ENCODE measurements at regions of chr7 and their contacts with region 1.

Region 1: GRCh38 chr7:142557971-142558582 is 191.2 kb upstream of the PRSS1 start:
- DNase-seq: peak; percentile 29
- H3K4me3 Mint-ChIP-seq: peak overlapping the region; percentile 78
- H3K27ac Mint-ChIP-seq: peak overlapping the region; percentile 35
- H3K4me1 Mint-ChIP-seq: peaks cover 30% of the 10 kb centered on the region
- H3K27me3 Mint-ChIP-seq: peaks cover 2% of the 10 kb centered on the region

Region 2: DNA sequence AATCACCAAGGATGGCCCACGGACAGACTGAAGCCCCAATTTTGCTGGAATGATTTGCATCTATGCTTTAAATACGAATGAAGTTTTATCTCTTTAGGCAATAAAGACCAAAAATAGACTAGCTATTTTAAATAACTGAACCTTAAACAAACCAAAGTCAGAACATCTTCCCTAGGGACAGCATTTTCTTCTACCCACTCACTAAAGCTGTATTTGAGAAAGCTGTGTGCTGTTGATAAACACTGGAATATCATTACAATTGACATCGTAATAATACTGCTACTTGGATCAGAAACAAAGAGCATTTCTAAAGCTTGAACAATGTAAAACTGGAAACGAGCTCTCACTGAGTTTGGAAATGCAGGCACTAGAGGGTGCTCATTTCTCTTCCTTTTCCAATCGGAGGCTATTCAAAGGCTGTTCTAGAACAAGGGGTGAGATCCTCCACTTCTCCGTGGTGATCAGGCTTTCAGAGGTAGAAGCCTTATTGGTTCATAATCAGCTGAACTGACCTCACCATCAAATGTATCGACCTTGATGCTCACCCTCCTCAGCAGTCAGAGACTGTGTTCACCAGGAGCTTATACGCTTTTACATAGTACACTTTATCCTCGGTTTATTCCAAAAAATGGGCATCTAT is 34.1 kb before region 1 on chr7:
- intact Hi-C with region 1: no loop called
- DNase-seq: no peak
- H3K4me3 Mint-ChIP-seq: no peak overlapping the region
- H3K27ac Mint-ChIP-seq: no peak overlapping the region
- H3K4me1 Mint-ChIP-seq: peaks cover 10% of the 10 kb centered on the region
- H3K27me3 Mint-ChIP-seq: peaks cover 10% of the 10 kb centered on the region

Region 3: DNA sequence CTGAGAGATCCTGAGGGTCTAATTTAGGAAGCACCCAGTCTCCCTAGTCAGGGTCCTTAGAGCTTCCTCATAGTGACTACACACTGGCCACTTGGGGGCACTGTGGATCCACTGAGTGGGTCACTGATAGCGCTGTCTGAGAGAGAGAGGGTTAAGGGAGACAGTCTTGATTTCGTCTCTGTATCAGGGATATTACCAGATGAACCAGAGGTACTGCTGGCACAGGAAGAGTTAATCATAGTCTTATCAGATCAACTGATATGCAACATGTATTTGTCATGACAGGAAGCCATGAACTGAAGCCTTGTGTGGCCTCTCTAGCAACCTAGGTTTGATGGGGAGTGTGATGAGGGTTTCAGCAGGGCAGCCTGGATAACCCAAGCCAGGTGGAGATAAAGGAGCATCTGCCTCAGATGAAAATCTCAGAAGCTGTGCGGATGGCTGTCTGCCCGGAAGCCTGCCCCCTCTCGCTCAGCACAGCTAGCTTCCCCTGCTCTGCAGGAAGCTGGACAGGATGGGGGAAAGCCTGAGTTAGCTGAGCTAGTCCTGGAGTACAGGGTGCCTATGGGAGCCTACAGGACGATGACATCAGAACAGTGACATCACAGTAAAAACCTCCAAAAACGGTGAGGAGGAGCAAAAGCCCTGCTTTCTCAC is 22.8 kb before region 1 on chr7:
- intact Hi-C with region 1: loop called (anchors 1 kb)
- DNase-seq: peak; percentile 58
- H3K4me3 Mint-ChIP-seq: peak overlapping the region; percentile 59
- H3K27ac Mint-ChIP-seq: peak overlapping the region; percentile 62
- H3K4me1 Mint-ChIP-seq: peaks cover 29% of the 10 kb centered on the region
- H3K27me3 Mint-ChIP-seq: no peaks in the 10 kb centered on the region

Region 4: DNA sequence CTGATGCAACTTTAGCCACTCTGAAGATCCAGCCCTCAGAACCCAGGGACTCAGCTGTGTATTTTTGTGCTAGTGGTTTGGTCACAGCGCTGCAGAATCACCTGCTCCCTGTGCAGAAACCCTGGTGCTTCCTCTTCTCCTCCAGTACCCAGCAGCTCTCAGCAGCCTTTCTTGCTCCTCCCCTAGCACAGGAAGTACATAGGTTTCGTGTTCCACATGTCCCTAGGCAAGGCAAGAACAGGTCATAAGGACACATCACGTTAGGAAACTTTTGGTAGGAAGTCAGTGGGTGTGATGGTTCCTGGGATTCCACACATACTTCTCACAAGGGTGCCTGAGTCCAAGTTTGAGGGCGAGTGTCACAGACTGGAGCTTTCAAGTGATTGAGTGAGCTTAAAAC is 23.3 kb after region 1 on chr7:
- intact Hi-C with region 1: loop called (anchors 1 kb)
- DNase-seq: peak; percentile 26
- H3K4me3 Mint-ChIP-seq: peak overlapping the region; percentile 45
- H3K27ac Mint-ChIP-seq: peak overlapping the region; percentile 91
- H3K4me1 Mint-ChIP-seq: peaks cover 38% of the 10 kb centered on the region
- H3K27me3 Mint-ChIP-seq: no peaks in the 10 kb centered on the region

Region 5: DNA sequence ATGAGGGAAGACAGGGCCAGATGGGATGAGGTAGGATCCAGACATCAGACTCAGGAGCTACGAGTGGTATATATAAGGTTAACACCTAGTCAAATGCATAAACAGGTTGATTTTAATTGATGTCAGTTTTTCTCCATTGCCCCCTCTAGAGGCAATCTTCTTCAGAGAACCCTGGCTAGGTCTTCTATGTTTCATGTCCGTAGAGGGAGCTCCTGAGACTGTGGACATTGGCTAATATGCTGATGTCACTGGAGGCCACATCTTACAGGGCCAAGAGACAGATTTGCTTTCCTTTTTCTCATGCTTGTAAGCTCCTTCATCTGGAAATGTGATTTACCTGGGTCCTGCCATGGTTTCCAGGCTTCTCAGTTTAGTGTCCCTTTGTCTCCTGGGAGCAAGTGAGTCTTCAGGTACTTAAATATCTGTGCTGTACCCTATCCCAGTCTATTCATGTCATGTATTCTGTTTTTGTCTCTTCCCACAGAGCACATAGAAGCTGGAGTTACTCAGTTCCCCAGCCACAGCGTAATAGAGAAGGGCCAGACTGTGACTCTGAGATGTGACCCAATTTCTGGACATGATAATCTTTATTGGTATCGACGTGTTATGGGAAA is 29.6 kb after region 1 on chr7:
- intact Hi-C with region 1: loop called (anchors 1 kb)
- DNase-seq: no peak
- H3K4me3 Mint-ChIP-seq: no peak overlapping the region
- H3K27ac Mint-ChIP-seq: no peak overlapping the region
- H3K4me1 Mint-ChIP-seq: peaks cover 9% of the 10 kb centered on the region
- H3K27me3 Mint-ChIP-seq: no peaks in the 10 kb centered on the region

Measured in activated T-helper 1 cell treated with anti-CD3 and anti-CD28 coated beads, Interleukin-12 subunit alpha, Interleukin-12 subunit beta, Interleukin-2, Interleukin-4 antibody, amounts not matched to agents 30 ng/mL and 10 ng/mL and 1 ng/mL, durations not matched to agents 14 hours and 24 hours and 36 hours (primary cell).